ENCODE measurements at regions of chr3 and their contacts with region 1.

Region 1: DNA sequence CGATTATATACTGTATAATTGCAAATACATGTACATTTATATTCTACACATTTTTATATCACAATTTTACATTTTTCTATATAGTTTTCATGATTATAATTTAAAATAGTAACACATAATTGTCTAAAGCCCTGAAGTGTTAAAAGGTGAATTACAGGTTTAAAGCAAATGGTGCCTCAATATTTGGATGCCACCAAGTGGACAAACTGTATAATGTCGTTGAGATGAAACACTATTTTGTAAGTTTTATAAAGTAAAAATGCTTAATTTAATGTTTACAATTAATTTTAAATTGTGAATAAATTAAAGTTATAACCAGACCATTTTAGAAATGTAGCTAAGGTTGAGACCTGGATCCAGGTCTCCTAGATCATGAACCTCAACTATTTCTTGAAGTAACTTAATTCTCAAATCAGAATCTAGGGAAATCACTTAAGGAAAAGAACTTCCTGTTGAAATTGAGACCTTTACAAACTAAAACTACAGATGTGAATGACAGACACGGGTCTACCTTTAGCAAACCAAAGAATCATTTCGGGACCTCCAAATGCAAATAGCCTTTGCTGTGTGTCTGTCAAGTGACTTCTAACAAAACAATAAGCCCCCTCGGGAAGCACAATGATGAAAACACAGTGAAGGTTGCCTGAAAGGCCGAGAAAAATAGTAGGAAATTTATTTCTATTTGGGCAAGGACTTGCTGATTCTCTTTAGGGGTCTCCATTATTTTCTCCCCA is 37.8 kb downstream of the EHHADH start:
- DNase-seq: peak; percentile 14
- H3K4me3 ChIP-seq: no peak overlapping the region
- H3K27ac ChIP-seq: no peak overlapping the region
- H3K4me1 ChIP-seq: no peaks in the 10 kb centered on the region
- H3K27me3 ChIP-seq: no peaks in the 10 kb centered on the region
- CTCF ChIP-seq: peak; percentile 35 to 67

Region 2: DNA sequence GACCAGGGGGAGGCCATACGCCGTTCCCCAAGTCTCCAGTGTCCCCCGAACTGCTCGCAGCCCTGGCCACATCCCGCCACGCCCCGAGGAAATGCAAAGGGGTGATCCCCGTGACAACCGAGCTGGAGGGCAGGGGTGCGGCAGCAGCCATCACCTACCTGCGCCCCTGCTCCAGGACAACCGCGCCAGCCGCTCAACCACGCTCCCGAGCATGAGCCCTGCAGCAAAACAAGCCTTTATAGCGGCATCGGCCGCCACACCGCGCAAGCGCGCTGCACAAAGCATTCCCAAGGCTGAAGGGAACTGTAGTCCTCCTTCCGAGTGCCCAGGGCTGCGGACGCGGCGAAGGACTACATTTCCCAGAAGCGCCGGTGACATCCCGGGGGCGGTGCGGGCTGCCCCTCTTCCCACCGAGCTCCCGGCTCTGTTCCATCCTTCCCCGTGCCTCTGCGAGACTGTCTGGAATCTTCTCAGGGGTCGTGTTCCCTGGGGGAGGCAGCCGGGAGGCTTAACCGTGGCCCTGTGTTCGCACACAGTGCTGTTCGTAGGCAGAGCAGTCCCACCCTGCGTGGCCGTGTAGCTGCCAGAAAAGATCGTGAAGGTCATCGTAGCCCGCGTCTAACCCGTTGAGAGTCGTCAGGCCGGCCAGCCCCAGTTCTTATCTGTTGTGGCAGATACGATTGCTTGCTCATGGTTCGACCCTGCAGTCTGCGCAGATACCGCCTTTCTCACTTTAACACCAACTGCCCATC is 1198.2 kb before region 1 on chr3 and contains the start of gene ABCC5:
- CTCF ChIA-PET with region 1: no interaction called
- dilution Hi-C with region 1: no loop called
- in situ Hi-C with region 1: no loop called
- intact Hi-C with region 1: no loop called
- DNase-seq: peak; percentile 87
- H3K4me3 ChIP-seq: peak within 1 kb of the TSS; percentile 97 to 100 (median 100)
- H3K27ac ChIP-seq: peak within 1 kb of the TSS; percentile 35
- H3K4me1 ChIP-seq: peaks cover 17% of the 10 kb centered on the region
- H3K27me3 ChIP-seq: no peaks in the 10 kb centered on the region
- CTCF ChIP-seq: no peak
- total RNA-seq, gene ABCC5: 17.3 to 24.1 TPM

Region 3: DNA sequence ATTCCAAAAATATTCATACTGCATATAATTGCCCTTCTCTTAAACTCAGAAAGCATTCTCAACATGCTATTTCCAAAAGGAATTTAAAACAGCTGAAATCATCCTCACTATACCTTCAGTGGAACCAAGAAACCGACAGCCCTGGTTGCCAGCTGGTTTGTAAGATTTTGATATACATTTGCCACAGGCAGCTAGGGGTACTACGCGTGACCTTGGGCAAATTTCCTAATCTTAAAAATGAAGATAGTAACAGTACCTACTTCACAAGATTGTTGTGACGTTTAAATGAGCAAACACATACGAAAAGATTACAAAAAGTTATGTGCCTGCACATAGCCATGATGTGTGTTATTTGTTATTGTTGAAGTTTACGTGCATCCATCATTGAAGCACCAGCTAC is 70.5 kb before region 1 on chr3:
- CTCF ChIA-PET with region 1: interaction called, 16 read pairs
- dilution Hi-C with region 1: no loop called
- in situ Hi-C with region 1: no loop called
- intact Hi-C with region 1: no loop called
- DNase-seq: no peak
- H3K4me3 ChIP-seq: no peak overlapping the region
- H3K27ac ChIP-seq: no peak overlapping the region
- H3K4me1 ChIP-seq: no peaks in the 10 kb centered on the region
- H3K27me3 ChIP-seq: peaks cover 20% of the 10 kb centered on the region
- CTCF ChIP-seq: no peak

Region 4: GRCh38 chr3:185308126-185308754 is 92.2 kb after region 1 on chr3:
- CTCF ChIA-PET with region 1: no interaction called
- dilution Hi-C with region 1: no loop called
- in situ Hi-C with region 1: no loop called
- intact Hi-C with region 1: loop called (anchors 10 kb)
- DNase-seq: peak; percentile 59
- H3K4me3 ChIP-seq: no peak overlapping the region
- H3K27ac ChIP-seq: no peak overlapping the region
- H3K4me1 ChIP-seq: no peaks in the 10 kb centered on the region
- H3K27me3 ChIP-seq: no peaks in the 10 kb centered on the region
- CTCF ChIP-seq: peak; percentile 74 to 88

Region 5: GRCh38 chr3:185693985-185694653 is 478.1 kb after region 1 on chr3:
- CTCF ChIA-PET with region 1: no interaction called
- dilution Hi-C with region 1: no loop called
- in situ Hi-C with region 1: no loop called
- intact Hi-C with region 1: no loop called
- DNase-seq: peak; percentile 40
- H3K4me3 ChIP-seq: no peak overlapping the region
- H3K27ac ChIP-seq: peak overlapping the region; percentile 8
- H3K4me1 ChIP-seq: peaks cover 16% of the 10 kb centered on the region
- H3K27me3 ChIP-seq: no peaks in the 10 kb centered on the region
- CTCF ChIP-seq: no peak